Activated CD4-positive, alpha-beta memory T cell treated with anti-CD3 and anti-CD28 coated beads for 36 hours (primary cell): ENCODE measurements at regions of chr3 and their contacts with region 1.

Region 1: GRCh38 chr3:101676765-101677435 is at the start of gene ZBTB11:
- DNase-seq: peak; percentile 100
- H3K4me3 Mint-ChIP-seq: peak within 1 kb of the TSS; percentile 93
- H3K27ac Mint-ChIP-seq: peak within 1 kb of the TSS; percentile 91
- H3K4me1 Mint-ChIP-seq: peaks cover 57% of the 10 kb centered on the region
- H3K27me3 Mint-ChIP-seq: no peaks in the 10 kb centered on the region
- total RNA-seq, gene ZBTB11: 28.0 to 30.3 TPM

Region 2: DNA sequence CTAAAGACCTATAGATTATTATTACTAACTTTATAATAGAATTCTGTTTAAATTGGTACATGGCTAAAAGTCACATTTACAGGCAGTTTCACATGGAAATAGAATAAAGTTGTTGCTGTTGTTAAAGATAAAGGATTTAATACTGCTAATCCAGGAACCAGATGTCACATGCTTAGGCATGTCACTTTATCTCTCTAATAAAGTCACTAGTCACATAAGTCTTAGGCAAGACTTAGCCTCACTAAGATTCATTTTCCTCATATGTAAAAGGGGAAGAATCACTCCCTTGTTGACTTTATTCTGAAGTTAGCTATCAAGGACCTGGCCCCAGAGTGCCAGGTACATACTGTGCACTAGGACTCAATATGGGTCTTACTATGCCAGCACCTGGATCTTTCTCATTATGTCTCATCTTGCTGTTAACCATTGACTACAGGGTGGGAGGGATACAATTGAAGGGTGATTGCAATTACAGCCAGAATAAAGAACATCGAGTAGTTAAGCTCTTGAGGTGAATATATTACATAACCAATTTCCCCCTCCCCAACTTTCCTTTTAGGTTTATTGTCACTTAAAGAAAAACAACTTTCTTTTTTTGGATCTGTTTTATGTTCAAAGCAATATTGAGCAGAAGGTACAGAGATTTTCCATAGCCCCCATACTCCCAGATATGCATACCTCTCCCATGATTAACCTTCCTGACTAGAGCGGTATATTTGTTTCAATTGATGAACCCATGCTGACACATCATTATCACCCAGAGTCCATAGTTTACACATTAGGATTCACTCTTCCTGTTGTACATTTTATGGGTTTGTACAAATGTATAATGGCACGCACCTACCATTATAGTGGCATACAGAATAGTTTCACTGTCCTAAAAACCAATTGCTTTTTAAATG is 1238.9 kb before region 1 on chr3:
- CTCF ChIA-PET with region 1: no interaction called
- POLR2A ChIA-PET with region 1: no interaction called
- intact Hi-C with region 1: no loop called
- DNase-seq: no peak
- H3K4me3 Mint-ChIP-seq: no peak overlapping the region
- H3K27ac Mint-ChIP-seq: no peak overlapping the region
- H3K4me1 Mint-ChIP-seq: peaks cover 8% of the 10 kb centered on the region
- H3K27me3 Mint-ChIP-seq: no peaks in the 10 kb centered on the region

Region 3: DNA sequence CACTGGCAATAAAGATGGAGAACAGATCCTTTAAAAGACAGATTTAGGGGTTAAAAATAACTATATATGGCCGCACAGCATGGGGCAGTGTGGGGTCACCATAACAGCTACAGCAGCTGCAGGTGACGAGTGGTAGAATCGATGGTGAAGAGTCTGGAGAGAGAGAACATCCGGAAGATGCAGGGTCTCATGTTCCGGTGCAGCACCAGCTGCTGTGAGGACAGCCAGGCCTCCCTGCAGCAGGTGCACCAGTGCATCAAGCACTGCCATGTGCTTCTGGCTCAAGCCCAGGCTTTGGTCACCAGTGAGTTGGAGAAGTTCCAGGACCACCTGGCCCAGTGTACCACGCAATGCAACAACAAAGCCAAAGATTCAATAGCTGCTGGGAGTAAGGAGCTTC is 262.8 kb before region 1 on chr3:
- CTCF ChIA-PET with region 1: no interaction called
- POLR2A ChIA-PET with region 1: no interaction called
- intact Hi-C with region 1: no loop called
- DNase-seq: no peak
- H3K4me3 Mint-ChIP-seq: no peak overlapping the region
- H3K27ac Mint-ChIP-seq: peak overlapping the region; percentile 43
- H3K4me1 Mint-ChIP-seq: peaks cover 33% of the 10 kb centered on the region
- H3K27me3 Mint-ChIP-seq: no peaks in the 10 kb centered on the region

Region 4: GRCh38 chr3:101561630-101562328 is 115.1 kb before region 1 on chr3 and contains the start of gene TRMT10C:
- CTCF ChIA-PET with region 1: no interaction called
- POLR2A ChIA-PET with region 1: no interaction called
- intact Hi-C with region 1: loop called (anchors 1 kb)
- DNase-seq: peak; percentile 96
- H3K4me3 Mint-ChIP-seq: peak within 1 kb of the TSS; percentile 97
- H3K27ac Mint-ChIP-seq: peak within 1 kb of the TSS; percentile 96
- H3K4me1 Mint-ChIP-seq: peaks cover 37% of the 10 kb centered on the region
- H3K27me3 Mint-ChIP-seq: peaks cover 3% of the 10 kb centered on the region
- total RNA-seq, gene TRMT10C: 39.5 to 43.2 TPM

Region 5: DNA sequence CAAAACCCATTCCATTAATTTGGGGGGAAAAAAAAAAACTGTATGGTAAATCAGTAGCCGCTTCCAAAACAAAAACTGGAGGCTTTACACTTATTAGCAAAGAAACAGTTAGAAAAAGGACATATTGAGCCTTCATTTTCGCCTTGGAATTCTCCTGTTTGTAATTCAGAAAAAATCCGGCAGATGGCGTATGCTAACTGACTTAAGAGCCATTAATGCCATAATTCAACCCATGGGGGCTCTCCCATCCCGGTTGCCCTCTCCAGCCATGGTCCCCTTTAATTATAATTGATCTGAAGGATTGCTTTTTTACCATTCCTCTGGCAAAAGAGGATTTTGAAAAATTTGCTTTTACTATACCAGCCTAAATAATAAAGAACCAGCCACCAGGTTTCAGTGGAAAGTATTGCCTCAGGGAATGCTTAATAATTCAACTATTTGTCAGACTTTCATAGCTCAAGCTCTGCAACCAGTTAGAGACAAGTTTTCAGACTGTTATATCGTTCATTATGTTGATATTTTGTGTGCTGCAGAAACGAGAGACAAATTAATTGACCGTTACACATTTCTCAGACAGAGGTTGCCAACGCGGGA is 19.0 kb after region 1 on chr3:
- CTCF ChIA-PET with region 1: interaction called, 3 read pairs
- POLR2A ChIA-PET with region 1: no interaction called
- intact Hi-C with region 1: loop called (anchors 2 kb)
- DNase-seq: no peak
- H3K4me3 Mint-ChIP-seq: no peak overlapping the region
- H3K27ac Mint-ChIP-seq: no peak overlapping the region
- H3K4me1 Mint-ChIP-seq: peaks cover 8% of the 10 kb centered on the region
- H3K27me3 Mint-ChIP-seq: no peaks in the 10 kb centered on the region

Region 6: DNA sequence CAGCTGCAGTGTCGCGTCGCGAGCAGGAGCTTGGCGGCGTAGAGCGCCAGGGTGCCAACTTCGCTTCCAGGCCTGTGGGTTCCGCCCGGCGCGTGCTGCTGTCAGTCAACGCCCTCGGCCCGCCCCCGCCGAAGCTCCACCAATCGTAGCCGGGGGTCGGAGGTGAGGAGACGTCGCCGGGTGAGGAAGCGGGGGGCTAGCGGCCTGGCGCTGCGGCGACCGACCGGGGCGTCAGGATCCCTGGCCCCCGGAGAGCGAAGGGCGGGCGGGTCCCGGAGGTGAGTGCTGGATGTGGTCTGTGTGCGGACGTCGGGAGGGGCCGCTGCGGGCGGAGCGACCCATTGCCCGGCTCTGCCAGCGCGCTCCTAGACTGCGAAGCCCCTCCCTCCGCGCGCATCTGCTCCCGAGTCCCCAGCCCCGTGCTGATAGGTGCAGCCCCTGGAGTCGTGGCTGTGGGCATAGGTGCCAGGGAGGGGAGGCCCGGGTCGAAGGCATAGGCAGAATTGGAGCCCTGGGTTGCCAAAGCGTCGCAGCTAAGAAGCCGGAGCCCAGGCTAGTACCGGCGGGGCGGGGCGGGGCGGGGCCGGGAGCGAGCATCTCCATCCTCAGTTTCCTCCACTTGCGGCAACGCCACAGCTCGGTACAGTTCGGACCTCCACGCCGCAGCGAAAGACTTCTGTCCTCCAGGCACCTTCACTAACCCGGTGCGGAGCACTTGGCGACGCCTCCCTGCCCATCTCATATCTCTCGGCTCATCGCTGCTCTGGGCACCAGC is 102.3 kb after region 1 on chr3 and contains the start of gene NXPE3:
- CTCF ChIA-PET with region 1: no interaction called
- POLR2A ChIA-PET with region 1: interaction called, 3 read pairs
- intact Hi-C with region 1: loop called (anchors 1 kb)
- DNase-seq: peak; percentile 96
- H3K4me3 Mint-ChIP-seq: peak within 1 kb of the TSS; percentile 95
- H3K27ac Mint-ChIP-seq: peak within 1 kb of the TSS; percentile 95
- H3K4me1 Mint-ChIP-seq: peaks cover 51% of the 10 kb centered on the region
- H3K27me3 Mint-ChIP-seq: no peaks in the 10 kb centered on the region
- total RNA-seq, gene NXPE3: 18.7 to 19.8 TPM